GM12878 (cell line): ENCODE measurements at regions of chr9 and their contacts with region 1.

Region 1: GRCh38 chr9:28774416-28775235 is 1201.3 kb upstream of the C9orf72 start:
- DNase-seq: no peak
- ATAC-seq: peak; percentile 59
- H3K4me3 ChIP-seq: no peak overlapping the region
- H3K27ac ChIP-seq: no peak overlapping the region
- H3K4me1 ChIP-seq: no peaks in the 10 kb centered on the region
- H3K27me3 ChIP-seq: no peaks in the 10 kb centered on the region
- CTCF ChIP-seq: peak; percentile 44 to 47 (median 47); a peak in 5 of 6 replicates
- EP300 ChIP-seq: no peak
- POLR2A ChIP-seq: no peak
- RAD21 ChIP-seq: peak; percentile 45

Region 2: GRCh38 chr9:28539432-28540070 is 235.1 kb before region 1 on chr9:
- CTCF ChIA-PET with region 1: no interaction called
- POLR2A ChIA-PET with region 1: no interaction called
- RAD21 ChIA-PET with region 1: no interaction called
- SMC1A ChIA-PET with region 1: no interaction called
- in situ Hi-C with region 1: no loop called
- intact Hi-C with region 1: no loop called
- DNase-seq: no peak
- ATAC-seq: no peak
- H3K4me3 ChIP-seq: no peak overlapping the region
- H3K27ac ChIP-seq: no peak overlapping the region
- H3K4me1 ChIP-seq: no peaks in the 10 kb centered on the region
- H3K27me3 ChIP-seq: no peaks in the 10 kb centered on the region
- CTCF ChIP-seq: no peak
- EP300 ChIP-seq: no peak
- POLR2A ChIP-seq: no peak
- RAD21 ChIP-seq: no peak

Region 3: GRCh38 chr9:28832168-28832760 is 57.6 kb after region 1 on chr9:
- CTCF ChIA-PET with region 1: no interaction called
- POLR2A ChIA-PET with region 1: no interaction called
- RAD21 ChIA-PET with region 1: no interaction called
- SMC1A ChIA-PET with region 1: no interaction called
- in situ Hi-C with region 1: no loop called
- intact Hi-C with region 1: loop called (anchors 5 kb)
- DNase-seq: no peak
- ATAC-seq: no peak
- H3K4me3 ChIP-seq: no peak overlapping the region
- H3K27ac ChIP-seq: no peak overlapping the region
- H3K4me1 ChIP-seq: no peaks in the 10 kb centered on the region
- H3K27me3 ChIP-seq: no peaks in the 10 kb centered on the region
- CTCF ChIP-seq: no peak
- EP300 ChIP-seq: no peak
- POLR2A ChIP-seq: no peak
- RAD21 ChIP-seq: no peak

Region 4: GRCh38 chr9:29691758-29692407 is 917.3 kb after region 1 on chr9:
- CTCF ChIA-PET with region 1: interaction called, 4 read pairs
- POLR2A ChIA-PET with region 1: no interaction called
- RAD21 ChIA-PET with region 1: no interaction called
- SMC1A ChIA-PET with region 1: interaction called, 3 read pairs
- in situ Hi-C with region 1: loop called (anchors 10 kb)
- intact Hi-C with region 1: no loop called
- DNase-seq: no peak
- ATAC-seq: peak; percentile 94
- H3K4me3 ChIP-seq: no peak overlapping the region
- H3K27ac ChIP-seq: no peak overlapping the region
- H3K4me1 ChIP-seq: no peaks in the 10 kb centered on the region
- H3K27me3 ChIP-seq: no peaks in the 10 kb centered on the region
- CTCF ChIP-seq: peak; percentile 14 to 46 (median 44); a peak in 3 of 6 replicates
- EP300 ChIP-seq: no peak
- POLR2A ChIP-seq: no peak
- RAD21 ChIP-seq: peak; percentile 42